ENCODE measurements at regions of chr4 and their contacts with region 1.

Region 1: GRCh38 chr4:102500696-102501446 is at the start of gene NFKB1:
- DNase-seq: peak; percentile 83 to 95 (median 88)
- H3K4me3 ChIP-seq: peak within 1 kb of the TSS; percentile 88 to 97
- H3K4me3 Mint-ChIP-seq: peak within 1 kb of the TSS; percentile 91 to 98 (median 94)
- H3K27ac ChIP-seq: peak within 1 kb of the TSS; percentile 100
- H3K27ac Mint-ChIP-seq: peak within 1 kb of the TSS; percentile 97 to 100 (median 98)
- H3K4me1 ChIP-seq: peaks cover 37% of the 10 kb centered on the region
- H3K4me1 Mint-ChIP-seq: peaks cover 18 to 39% (median 26%) of the 10 kb centered on the region in 4 donors
- H3K27me3 ChIP-seq: no peaks in the 10 kb centered on the region
- H3K27me3 Mint-ChIP-seq: no peaks in the 10 kb centered on the region
- total RNA-seq, gene NFKB1: 79.8 to 84.9 TPM

Region 2: DNA sequence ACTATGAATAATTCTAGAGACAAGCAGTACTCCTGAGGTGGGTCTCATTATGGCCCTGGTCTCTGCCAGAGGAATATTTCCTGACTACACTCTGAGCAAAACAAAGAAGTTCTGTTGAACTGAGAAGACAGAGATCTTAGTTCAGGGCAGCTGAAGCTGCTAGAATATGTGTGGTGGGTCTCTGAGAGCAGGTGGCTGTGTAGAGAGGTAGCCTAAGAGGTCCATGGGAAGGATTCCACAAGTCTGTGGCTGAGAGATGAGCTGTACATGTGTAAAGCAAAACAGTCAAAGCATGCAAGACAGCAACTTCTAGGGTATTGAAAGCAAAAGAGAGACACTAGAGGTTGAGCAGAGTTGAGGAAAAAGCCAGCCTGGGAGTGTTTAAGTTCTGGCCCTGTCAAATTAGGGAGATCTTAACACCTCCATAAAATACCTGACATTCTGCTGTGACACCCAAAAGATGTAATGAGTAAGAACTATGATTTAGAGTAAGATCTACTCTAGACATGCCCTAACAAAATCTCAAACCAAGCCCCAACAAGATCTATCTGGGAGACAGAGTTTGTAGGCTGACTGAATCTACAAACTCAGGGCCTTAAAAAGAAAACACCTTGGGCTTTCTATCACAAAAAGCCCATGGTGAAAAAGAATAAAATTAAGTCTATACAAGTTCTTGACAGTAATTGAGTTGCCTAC is 436.0 kb before region 1 on chr4:
- CTCF ChIA-PET with region 1: no interaction called
- POLR2A ChIA-PET with region 1: no interaction called
- intact Hi-C with region 1: no loop called
- DNase-seq: no peak
- H3K4me3 ChIP-seq: no peak overlapping the region
- H3K4me3 Mint-ChIP-seq: no peak overlapping the region
- H3K27ac ChIP-seq: no peak overlapping the region
- H3K27ac Mint-ChIP-seq: no peak overlapping the region
- H3K4me1 ChIP-seq: no peaks in the 10 kb centered on the region
- H3K4me1 Mint-ChIP-seq: no peaks in the 10 kb centered on the region
- H3K27me3 ChIP-seq: no peaks in the 10 kb centered on the region
- H3K27me3 Mint-ChIP-seq: no peaks in the 10 kb centered on the region

Region 3: GRCh38 chr4:102299354-102300107 is 201.3 kb before region 1 on chr4:
- CTCF ChIA-PET with region 1: no interaction called
- POLR2A ChIA-PET with region 1: no interaction called
- intact Hi-C with region 1: no loop called
- DNase-seq: peak; percentile 10 to 36 (median 14)
- H3K4me3 ChIP-seq: no peak overlapping the region
- H3K4me3 Mint-ChIP-seq: no peak overlapping the region
- H3K27ac ChIP-seq: no peak overlapping the region
- H3K27ac Mint-ChIP-seq: peak overlapping the region in 1 of 7 donors; percentile 31
- H3K4me1 ChIP-seq: no peaks in the 10 kb centered on the region
- H3K4me1 Mint-ChIP-seq: peaks cover 0 to 4% (median 1%) of the 10 kb centered on the region in 4 donors
- H3K27me3 ChIP-seq: no peaks in the 10 kb centered on the region
- H3K27me3 Mint-ChIP-seq: no peaks in the 10 kb centered on the region

Region 4: GRCh38 chr4:102449751-102450352 is 51.0 kb before region 1 on chr4:
- CTCF ChIA-PET with region 1: interaction called, 9 read pairs
- POLR2A ChIA-PET with region 1: interaction called, 3 read pairs
- intact Hi-C with region 1: loop called (anchors 2 kb)
- DNase-seq: peak; percentile 67 to 75 (median 68)
- H3K4me3 ChIP-seq: no peak overlapping the region
- H3K4me3 Mint-ChIP-seq: no peak overlapping the region
- H3K27ac ChIP-seq: no peak overlapping the region
- H3K27ac Mint-ChIP-seq: no peak overlapping the region
- H3K4me1 ChIP-seq: peaks cover 12% of the 10 kb centered on the region
- H3K4me1 Mint-ChIP-seq: peaks cover 5 to 21% (median 9%) of the 10 kb centered on the region in 4 donors
- H3K27me3 ChIP-seq: no peaks in the 10 kb centered on the region
- H3K27me3 Mint-ChIP-seq: no peaks in the 10 kb centered on the region

Region 5: DNA sequence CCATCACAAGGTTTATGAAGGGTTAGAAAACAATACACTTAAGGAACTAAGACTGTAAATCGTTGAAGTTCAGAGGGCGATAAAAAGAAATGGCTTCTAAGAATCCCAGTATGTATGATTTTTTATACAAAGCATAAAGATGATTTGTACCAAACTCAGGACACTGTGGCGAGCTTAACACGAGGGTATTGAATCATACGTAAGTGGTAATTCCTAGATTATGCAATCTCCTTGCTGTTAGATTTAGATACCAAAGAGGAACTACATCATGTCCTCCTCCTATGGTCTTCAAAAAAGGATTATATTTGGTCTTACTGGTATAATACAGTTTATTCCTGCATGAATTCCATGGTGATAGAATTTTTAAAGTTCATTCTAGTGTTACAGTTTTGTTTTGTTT is 24.2 kb after region 1 on chr4:
- CTCF ChIA-PET with region 1: interaction called, 8 read pairs
- POLR2A ChIA-PET with region 1: interaction called, 50 read pairs
- intact Hi-C with region 1: loop called (anchors 1 kb)
- DNase-seq: no peak
- H3K4me3 ChIP-seq: no peak overlapping the region
- H3K4me3 Mint-ChIP-seq: peak overlapping the region in 2 of 8 donors; percentile 10 to 57
- H3K27ac ChIP-seq: no peak overlapping the region
- H3K27ac Mint-ChIP-seq: peak overlapping the region in 6 of 7 donors; percentile 16 to 65 (median 51)
- H3K4me1 ChIP-seq: peaks cover 90% of the 10 kb centered on the region
- H3K4me1 Mint-ChIP-seq: peaks cover 59 to 94% (median 70%) of the 10 kb centered on the region in 4 donors
- H3K27me3 ChIP-seq: no peaks in the 10 kb centered on the region
- H3K27me3 Mint-ChIP-seq: no peaks in the 10 kb centered on the region

Region 6: DNA sequence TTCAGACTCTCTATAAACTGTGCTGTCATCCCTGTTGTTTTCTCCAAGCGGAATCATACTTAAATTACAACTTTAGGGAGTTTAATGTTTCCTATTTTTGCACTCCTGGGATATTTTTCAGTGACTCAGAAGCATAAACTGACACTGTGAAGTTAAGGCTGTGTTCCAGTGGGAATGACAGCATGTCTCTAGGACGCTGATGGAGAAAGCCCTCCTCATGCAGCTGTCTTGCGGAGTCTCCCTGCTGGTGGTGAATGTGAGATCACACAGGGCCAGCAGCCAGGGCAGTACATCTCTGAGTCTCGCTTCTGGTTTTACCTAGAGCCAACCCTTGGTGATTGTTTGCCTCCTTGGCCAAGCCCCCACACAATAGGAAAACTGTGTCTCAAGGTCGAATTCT is 53.6 kb after region 1 on chr4:
- CTCF ChIA-PET with region 1: interaction called, 3 read pairs
- POLR2A ChIA-PET with region 1: interaction called, 3 read pairs
- intact Hi-C with region 1: loop called (anchors 10 kb)
- DNase-seq: no peak
- H3K4me3 ChIP-seq: no peak overlapping the region
- H3K4me3 Mint-ChIP-seq: peak overlapping the region in 1 of 8 donors; percentile 15
- H3K27ac ChIP-seq: no peak overlapping the region
- H3K27ac Mint-ChIP-seq: peak overlapping the region in 5 of 7 donors; percentile 10 to 70 (median 52)
- H3K4me1 ChIP-seq: peaks cover 82% of the 10 kb centered on the region
- H3K4me1 Mint-ChIP-seq: peaks cover 40 to 52% (median 46%) of the 10 kb centered on the region in 4 donors
- H3K27me3 ChIP-seq: no peaks in the 10 kb centered on the region
- H3K27me3 Mint-ChIP-seq: no peaks in the 10 kb centered on the region

Region 7: DNA sequence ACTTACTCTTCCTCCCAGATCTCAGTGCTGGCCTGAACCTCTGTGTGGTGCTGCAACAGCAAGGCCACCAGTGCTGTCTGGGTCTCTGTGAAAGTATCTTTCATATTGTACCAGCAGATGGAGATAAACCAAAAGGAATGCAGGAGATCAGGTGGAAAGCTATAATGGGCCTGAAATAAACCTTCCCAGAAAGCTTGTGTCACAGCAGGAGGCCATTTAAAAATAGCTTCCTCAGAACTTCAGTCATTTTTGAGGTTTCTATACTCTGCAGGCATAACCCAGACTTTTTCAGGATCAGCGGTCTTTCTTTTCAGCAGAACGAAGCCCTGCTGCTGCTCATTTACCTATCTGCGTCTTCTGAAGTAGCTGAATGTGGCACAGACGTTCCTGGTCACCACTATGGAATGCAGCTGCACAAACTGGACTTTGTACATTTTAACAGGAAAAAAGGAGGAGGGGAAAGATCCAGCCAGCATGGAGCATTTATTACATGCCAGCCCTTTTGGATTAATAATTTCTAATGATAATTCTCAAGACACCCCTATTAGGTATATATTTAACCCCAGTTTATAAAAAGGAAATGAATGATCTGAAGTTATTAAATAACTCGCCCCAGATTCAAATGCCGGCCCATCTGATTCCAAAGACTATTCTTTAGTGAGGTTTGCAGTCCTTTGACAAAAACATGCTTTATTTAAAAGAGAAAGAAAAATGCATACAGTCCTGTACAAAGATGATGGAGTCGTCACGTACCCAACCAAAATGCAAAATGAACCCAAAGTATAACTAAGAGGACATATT is 120.0 kb after region 1 on chr4:
- CTCF ChIA-PET with region 1: interaction called, 6 read pairs
- POLR2A ChIA-PET with region 1: interaction called, 7 read pairs
- intact Hi-C with region 1: loop called (anchors 1 kb)
- DNase-seq: peak in 2 of 5 donors; percentile 27 to 35
- H3K4me3 ChIP-seq: no peak overlapping the region
- H3K4me3 Mint-ChIP-seq: peak overlapping the region in 1 of 8 donors; percentile 40
- H3K27ac ChIP-seq: no peak overlapping the region
- H3K27ac Mint-ChIP-seq: peak overlapping the region in 5 of 7 donors; percentile 20 to 82 (median 80)
- H3K4me1 ChIP-seq: peaks cover 18% of the 10 kb centered on the region
- H3K4me1 Mint-ChIP-seq: peaks cover 19 to 70% (median 40%) of the 10 kb centered on the region in 4 donors
- H3K27me3 ChIP-seq: no peaks in the 10 kb centered on the region
- H3K27me3 Mint-ChIP-seq: no peaks in the 10 kb centered on the region

Region 8: GRCh38 chr4:102760645-102761295 is 259.9 kb after region 1 on chr4 and contains the start of gene MANBA:
- CTCF ChIA-PET with region 1: no interaction called
- POLR2A ChIA-PET with region 1: interaction called, 4 read pairs
- intact Hi-C with region 1: loop called (anchors 5 kb)
- DNase-seq: peak; percentile 78 to 84 (median 79)
- H3K4me3 ChIP-seq: peak within 1 kb of the TSS; percentile 77 to 89
- H3K4me3 Mint-ChIP-seq: peak within 1 kb of the TSS; percentile 92 to 99 (median 98)
- H3K27ac ChIP-seq: peak within 1 kb of the TSS; percentile 65
- H3K27ac Mint-ChIP-seq: peak within 1 kb of the TSS; percentile 75 to 96 (median 94)
- H3K4me1 ChIP-seq: peaks cover 18% of the 10 kb centered on the region
- H3K4me1 Mint-ChIP-seq: peaks cover 24 to 47% (median 36%) of the 10 kb centered on the region in 4 donors
- H3K27me3 ChIP-seq: no peaks in the 10 kb centered on the region
- H3K27me3 Mint-ChIP-seq: peaks cover 0 to 3% of the 10 kb centered on the region in 2 donors
- total RNA-seq, gene MANBA: 30.0 to 33.2 TPM

Region 9: DNA sequence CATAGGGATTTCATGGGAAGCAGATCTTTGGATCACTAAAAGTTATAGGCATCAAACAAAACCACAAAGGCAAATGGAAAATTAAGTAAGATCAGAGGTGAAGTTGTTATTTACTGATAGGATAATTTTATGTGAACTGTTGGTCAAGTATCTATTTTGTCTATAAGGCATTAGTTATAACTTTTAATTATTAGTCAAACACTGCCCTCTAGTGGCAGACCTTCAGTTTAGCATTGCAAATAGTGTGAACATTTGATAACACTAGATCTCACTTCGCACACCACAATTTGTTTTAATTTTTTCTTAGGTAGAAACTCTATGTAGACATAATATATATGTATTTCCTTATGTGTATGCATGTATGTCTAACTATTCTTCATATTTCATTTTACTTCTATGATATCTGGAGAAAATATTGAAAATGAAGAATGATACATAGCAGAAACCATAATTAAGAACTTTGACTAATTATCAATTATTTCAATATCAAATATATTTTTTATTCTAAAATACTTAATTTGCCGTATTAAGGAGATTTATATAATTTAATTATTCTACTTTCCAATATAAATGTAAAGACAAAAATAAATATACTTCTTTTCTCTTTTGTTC is 1433.4 kb after region 1 on chr4:
- CTCF ChIA-PET with region 1: no interaction called
- POLR2A ChIA-PET with region 1: no interaction called
- intact Hi-C with region 1: no loop called
- DNase-seq: peak in 4 of 5 donors; percentile 4 to 20 (median 11)
- H3K4me3 ChIP-seq: no peak overlapping the region
- H3K4me3 Mint-ChIP-seq: no peak overlapping the region
- H3K27ac ChIP-seq: no peak overlapping the region
- H3K27ac Mint-ChIP-seq: no peak overlapping the region
- H3K4me1 ChIP-seq: no peaks in the 10 kb centered on the region
- H3K4me1 Mint-ChIP-seq: no peaks in the 10 kb centered on the region
- H3K27me3 ChIP-seq: no peaks in the 10 kb centered on the region
- H3K27me3 Mint-ChIP-seq: no peaks in the 10 kb centered on the region

Measured in CD4-positive, alpha-beta memory T cell (primary cell).